ENCODE measurements at regions of chr15 and their contacts with region 1.

Region 1: GRCh38 chr15:31338879-31339557 is 12.4 kb downstream of the KLF13 start:
- DNase-seq: peak; percentile 80
- H3K4me3 ChIP-seq: peak overlapping the region; percentile 36
- H3K27ac ChIP-seq: peak overlapping the region; percentile 100
- H3K4me1 ChIP-seq: peaks cover 99% of the 10 kb centered on the region
- H3K27me3 ChIP-seq: no peaks in the 10 kb centered on the region
- CTCF ChIP-seq: peak; percentile 7

Region 2: GRCh38 chr15:31391687-31392671 is 53.0 kb after region 1 on chr15:
- intact Hi-C with region 1: loop called (anchors 10 kb)
- DNase-seq: peak; percentile 92
- H3K4me3 ChIP-seq: peak overlapping the region; percentile 83
- H3K27ac ChIP-seq: peak overlapping the region; percentile 99
- H3K4me1 ChIP-seq: peaks cover 50% of the 10 kb centered on the region
- H3K27me3 ChIP-seq: no peaks in the 10 kb centered on the region
- CTCF ChIP-seq: no peak

Region 3: DNA sequence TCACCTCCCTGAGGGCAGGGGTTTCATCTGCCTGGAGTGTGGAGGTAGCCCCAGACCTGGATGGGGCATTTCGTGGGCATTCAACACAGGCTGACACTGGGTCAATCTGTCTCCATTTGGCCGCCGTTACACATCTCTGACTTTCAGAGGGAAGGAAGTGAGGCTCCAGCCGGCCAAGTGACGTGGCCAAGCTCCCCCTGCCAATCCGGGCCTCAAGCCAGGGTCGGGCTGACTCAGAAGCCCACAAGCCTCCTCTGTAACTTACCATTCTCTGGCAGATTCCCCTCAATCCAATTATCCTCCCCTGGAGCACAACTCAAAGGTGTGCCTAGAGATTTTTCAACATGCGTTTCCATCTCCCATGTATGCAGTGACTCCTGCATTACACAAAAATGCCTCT is 215.2 kb after region 1 on chr15:
- intact Hi-C with region 1: no loop called
- DNase-seq: peak; percentile 61
- H3K4me3 ChIP-seq: no peak overlapping the region
- H3K27ac ChIP-seq: peak overlapping the region; percentile 79
- H3K4me1 ChIP-seq: peaks cover 22% of the 10 kb centered on the region
- H3K27me3 ChIP-seq: no peaks in the 10 kb centered on the region
- CTCF ChIP-seq: no peak

Region 4: GRCh38 chr15:32042269-32042972 is 703.4 kb after region 1 on chr15:
- intact Hi-C with region 1: no loop called
- DNase-seq: no peak
- H3K4me3 ChIP-seq: no peak overlapping the region
- H3K27ac ChIP-seq: no peak overlapping the region
- H3K4me1 ChIP-seq: no peaks in the 10 kb centered on the region
- H3K27me3 ChIP-seq: no peaks in the 10 kb centered on the region
- CTCF ChIP-seq: peak; percentile 32